ENCODE measurements at regions of chr9 and their contacts with region 1.

Region 1: DNA sequence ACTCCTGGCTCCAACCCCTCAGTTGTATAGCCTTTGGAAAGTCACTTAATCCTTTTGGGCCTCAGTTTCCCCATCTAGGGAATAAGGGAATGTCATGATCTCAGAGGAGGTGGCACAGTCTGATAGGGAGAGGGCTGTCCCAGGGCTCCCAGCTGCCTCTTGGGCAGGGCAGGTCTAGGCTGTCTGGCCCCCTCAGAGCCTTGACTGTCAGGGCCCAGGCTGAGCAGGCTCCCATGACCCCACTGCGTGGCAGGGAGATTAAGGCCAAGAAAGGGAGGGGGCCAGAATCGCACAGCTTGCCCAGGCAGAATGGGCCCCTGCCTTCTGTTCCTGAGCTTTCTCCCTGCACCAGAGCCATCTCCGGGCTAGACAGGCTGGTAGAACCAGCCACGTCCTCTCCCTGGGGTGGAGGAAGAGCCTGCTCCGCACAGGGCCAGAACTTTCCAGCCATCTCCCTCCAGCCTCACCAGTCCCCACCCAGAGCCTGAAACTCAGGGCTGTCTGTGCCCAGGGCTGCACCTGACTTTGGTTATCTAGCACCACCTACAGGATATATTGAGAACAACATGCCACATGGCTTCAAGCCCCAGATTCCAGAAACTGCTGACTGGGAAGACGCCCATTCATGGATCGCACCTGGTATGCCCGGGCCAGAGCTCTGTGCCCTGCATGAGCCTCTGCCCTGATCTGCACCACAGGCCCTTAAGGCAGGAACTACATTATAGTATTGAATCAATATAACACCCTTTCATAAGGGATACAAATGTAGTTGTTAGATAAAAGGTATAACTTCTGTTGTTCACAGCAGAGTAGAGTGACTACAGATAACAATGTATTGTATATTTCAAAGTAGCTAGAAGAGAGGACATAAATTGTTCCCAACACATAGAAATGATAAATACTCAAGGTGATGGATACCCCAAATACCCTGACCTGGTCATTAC is 32.0 kb downstream of the NAIF1 start:
- DNase-seq: peak; percentile 80
- ATAC-seq: peak; percentile 98
- H3K4me3 Mint-ChIP-seq: no peak overlapping the region
- H3K27ac Mint-ChIP-seq: peak overlapping the region; percentile 6
- H3K4me1 Mint-ChIP-seq: 0 out of 2 replicates have a peak, but pooled peaks cover 2% of the 10 kb centered on the region
- H3K27me3 Mint-ChIP-seq: no peaks in the 10 kb centered on the region
- CTCF ChIP-seq: peak; percentile 93

Region 2: GRCh38 chr9:127899128-127899946 is 135.8 kb before region 1 on chr9 and contains the start of gene ST6GALNAC6:
- CTCF ChIA-PET with region 1: no interaction called
- POLR2A ChIA-PET with region 1: no interaction called
- DNase-seq: peak; percentile 55
- ATAC-seq: peak; percentile 44
- H3K4me3 Mint-ChIP-seq: peak within 1 kb of the TSS; percentile 87
- H3K27ac Mint-ChIP-seq: peak within 1 kb of the TSS; percentile 76
- H3K4me1 Mint-ChIP-seq: peaks cover 37% of the 10 kb centered on the region
- H3K27me3 Mint-ChIP-seq: no peaks in the 10 kb centered on the region; the same call in 1 of the 2 replicates
- CTCF ChIP-seq: no peak
- total RNA-seq, gene ST6GALNAC6: 45.1 to 47.5 TPM (median 45.3 TPM) in 3 replicates

Region 3: DNA sequence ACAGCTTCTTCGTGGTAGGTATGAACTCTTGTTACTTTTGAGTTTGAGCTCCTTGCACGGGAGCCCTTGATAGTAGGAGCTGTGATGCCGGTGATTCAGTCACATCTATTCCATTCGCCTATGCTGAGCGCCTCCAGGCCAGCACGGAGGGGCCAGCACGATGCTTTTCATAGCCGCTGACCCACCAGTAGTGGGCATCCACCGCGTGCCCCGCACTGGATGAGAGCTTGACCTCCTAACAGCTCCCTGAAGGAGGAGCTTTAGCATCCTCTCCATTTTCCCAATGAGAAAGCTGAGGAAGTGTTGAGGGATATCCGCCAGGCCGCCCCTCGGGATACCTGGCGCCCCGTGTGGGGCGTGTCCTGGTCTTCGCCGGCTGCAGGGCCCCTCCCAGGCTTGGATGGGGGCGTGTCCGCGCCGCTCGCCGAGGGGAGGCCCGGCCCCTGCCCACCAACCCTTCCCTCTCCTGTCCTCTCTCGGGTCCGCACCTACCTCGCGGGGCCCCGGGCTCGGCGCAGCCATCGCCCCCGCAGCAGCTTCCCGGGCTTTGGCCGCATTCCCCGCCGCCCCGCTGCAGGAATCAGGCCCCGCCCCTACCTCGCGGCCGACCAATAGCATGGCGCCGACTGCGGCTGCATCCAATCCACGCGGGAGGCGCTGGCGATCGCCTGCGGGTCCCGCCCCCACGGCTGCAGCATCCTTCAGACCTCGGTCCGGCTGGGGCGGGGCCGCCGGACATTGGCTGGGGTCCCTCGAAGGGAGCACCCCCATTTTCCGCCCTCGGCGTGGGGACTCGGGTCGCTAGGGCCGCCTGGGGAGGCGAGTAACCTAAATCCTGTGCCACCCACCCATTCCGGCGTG is 104.6 kb before region 1 on chr9 and contains the start of gene PIP5KL1:
- CTCF ChIA-PET with region 1: interaction called, 14 read pairs
- POLR2A ChIA-PET with region 1: no interaction called
- DNase-seq: peak; percentile 95
- ATAC-seq: peak; percentile 62
- H3K4me3 Mint-ChIP-seq: peak within 1 kb of the TSS; percentile 65
- H3K27ac Mint-ChIP-seq: peak within 1 kb of the TSS; percentile 93
- H3K4me1 Mint-ChIP-seq: peaks cover 27% of the 10 kb centered on the region
- H3K27me3 Mint-ChIP-seq: peaks cover 29% of the 10 kb centered on the region
- CTCF ChIP-seq: no peak
- total RNA-seq, gene PIP5KL1: 15.8 to 20.2 TPM (median 16.8 TPM) in 3 replicates

Region 4: DNA sequence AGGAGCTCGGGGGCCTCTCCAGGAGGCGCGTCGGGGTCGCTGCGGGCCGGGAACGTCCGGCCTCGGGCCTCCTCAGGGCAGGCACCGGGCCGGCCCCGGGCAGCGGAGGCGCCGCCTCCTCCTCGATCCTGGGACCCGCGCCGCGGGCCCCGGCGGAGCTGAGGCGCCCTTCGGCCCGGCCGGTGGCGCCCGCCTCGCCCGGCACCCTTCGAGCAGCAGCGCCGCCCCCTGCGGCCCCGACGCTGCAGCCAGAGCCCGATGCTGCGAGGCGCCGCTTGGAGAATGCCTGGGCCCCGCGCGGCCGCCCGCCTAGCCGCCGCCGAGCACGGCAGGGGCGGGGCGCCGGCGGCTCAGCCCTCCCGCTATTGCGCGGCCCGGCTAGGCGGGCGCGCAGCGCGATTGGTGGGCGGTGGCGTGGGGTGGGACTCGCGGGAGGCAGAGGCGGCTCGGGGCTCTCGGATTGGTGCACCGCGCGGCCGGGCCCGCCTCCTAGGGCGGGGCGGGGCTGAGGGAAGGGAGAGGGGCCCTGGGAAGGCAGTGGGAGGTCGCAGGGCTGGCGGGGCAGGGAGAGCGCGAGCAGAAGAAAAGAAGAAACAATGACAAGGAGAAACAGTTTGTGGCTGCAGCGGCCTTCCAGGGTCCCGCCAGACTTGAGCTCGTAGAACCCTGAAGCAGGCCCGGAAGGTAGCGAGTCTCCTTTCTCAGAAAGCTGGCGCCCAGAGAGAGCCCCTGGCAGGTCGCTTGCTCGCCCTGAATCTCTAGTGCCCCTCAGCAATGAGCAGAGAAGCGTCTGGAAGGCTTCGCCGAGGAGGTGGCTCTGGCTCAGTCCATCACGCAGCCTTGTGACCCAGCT is 54.2 kb before region 1 on chr9 and contains the start of gene EEIG1:
- CTCF ChIA-PET with region 1: interaction called, 18 read pairs
- POLR2A ChIA-PET with region 1: interaction called, 3 read pairs
- DNase-seq: peak; percentile 98
- ATAC-seq: peak; percentile 91
- H3K4me3 Mint-ChIP-seq: peak within 1 kb of the TSS; percentile 95
- H3K27ac Mint-ChIP-seq: peak within 1 kb of the TSS; percentile 97
- H3K4me1 Mint-ChIP-seq: peaks cover 54% of the 10 kb centered on the region
- H3K27me3 Mint-ChIP-seq: no peaks in the 10 kb centered on the region
- CTCF ChIP-seq: no peak
- total RNA-seq, gene EEIG1: 42.2 to 66.4 TPM (median 51.3 TPM) in 3 replicates

Region 5: DNA sequence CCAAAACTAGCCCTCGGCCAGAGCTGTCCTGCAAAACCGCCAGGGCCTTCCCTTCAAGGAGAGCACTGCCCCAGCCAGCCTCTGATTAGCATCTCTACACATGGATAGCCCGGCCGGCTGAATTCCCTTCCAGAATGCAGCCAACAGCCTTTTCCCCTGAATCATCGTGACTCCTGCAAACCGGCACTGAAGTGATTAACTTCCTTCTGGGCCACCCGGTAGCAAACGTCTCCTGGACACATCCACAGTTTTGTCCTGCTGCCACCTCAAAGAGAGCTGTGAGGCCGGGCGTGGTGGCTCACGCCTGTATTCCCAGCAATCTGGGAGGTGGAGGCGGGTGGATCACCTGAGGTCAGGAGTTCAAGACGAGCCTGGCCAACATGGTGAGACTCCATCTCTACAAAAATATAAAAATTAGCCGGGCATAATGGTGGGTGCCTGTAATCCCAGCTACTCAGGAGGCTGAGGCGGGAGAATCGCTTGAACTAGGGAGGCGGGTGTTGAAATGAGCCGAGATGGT is 33.3 kb before region 1 on chr9:
- CTCF ChIA-PET with region 1: interaction called, 11 read pairs
- POLR2A ChIA-PET with region 1: no interaction called
- DNase-seq: peak; percentile 46
- ATAC-seq: peak; percentile 92
- H3K4me3 Mint-ChIP-seq: no peak overlapping the region
- H3K27ac Mint-ChIP-seq: peak overlapping the region; percentile 85; the same call in 1 of the 2 replicates
- H3K4me1 Mint-ChIP-seq: peaks cover 11% of the 10 kb centered on the region
- H3K27me3 Mint-ChIP-seq: no peaks in the 10 kb centered on the region
- CTCF ChIP-seq: no peak

Region 6: DNA sequence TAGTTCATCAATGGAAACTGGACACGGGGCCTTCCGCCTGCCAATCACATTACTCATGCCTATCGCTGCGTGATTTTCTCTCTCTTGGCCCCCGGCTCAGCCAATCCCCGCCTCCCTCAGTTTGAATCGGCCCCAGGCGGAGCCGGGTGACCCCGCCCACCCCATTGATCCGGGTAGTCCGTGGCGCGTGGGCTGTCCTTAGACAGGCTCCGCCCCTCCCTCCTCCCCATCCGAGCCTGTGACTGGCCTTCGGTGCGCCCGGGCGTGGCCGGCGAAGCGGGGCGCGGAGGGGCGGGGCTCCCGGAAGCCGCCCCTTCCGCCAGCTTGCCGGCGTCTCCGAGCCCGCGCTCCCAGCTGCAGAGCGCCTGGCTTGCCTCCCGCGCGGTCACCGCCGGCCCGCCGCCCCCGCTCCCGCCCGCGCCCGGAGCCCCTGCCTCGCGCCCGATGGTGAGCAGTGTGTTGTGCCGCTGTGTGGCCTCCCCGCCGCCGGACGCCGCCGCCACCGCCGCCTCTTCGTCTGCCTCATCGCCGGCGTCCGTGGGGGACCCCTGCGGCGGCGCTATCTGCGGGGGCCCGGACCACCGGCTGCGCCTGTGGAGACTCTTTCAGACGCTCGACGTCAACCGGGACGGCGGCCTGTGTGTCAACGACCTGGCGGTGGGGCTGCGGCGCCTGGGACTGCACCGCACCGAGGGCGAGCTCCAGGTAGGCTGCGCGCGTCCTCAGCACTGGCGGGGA is 33.0 kb after region 1 on chr9 and contains the start of gene SLC25A25:
- CTCF ChIA-PET with region 1: interaction called, 19 read pairs
- POLR2A ChIA-PET with region 1: interaction called, 4 read pairs
- DNase-seq: peak; percentile 100
- ATAC-seq: peak; percentile 86
- H3K4me3 Mint-ChIP-seq: peak within 1 kb of the TSS; percentile 85
- H3K27ac Mint-ChIP-seq: peak within 1 kb of the TSS; percentile 67
- H3K4me1 Mint-ChIP-seq: peaks cover 38% of the 10 kb centered on the region
- H3K27me3 Mint-ChIP-seq: no peaks in the 10 kb centered on the region
- CTCF ChIP-seq: no peak
- total RNA-seq, gene SLC25A25: 15.2 to 17.4 TPM (median 15.2 TPM) in 3 replicates

Region 7: GRCh38 chr9:129006328-129007034 is 971.4 kb after region 1 on chr9:
- CTCF ChIA-PET with region 1: no interaction called
- POLR2A ChIA-PET with region 1: no interaction called
- DNase-seq: peak; percentile 80
- ATAC-seq: peak; percentile 86
- H3K4me3 Mint-ChIP-seq: no peak overlapping the region
- H3K27ac Mint-ChIP-seq: peak overlapping the region; percentile 82; the same call in 1 of the 2 replicates
- H3K4me1 Mint-ChIP-seq: 0 out of 2 replicates have a peak, but pooled peaks cover 2% of the 10 kb centered on the region
- H3K27me3 Mint-ChIP-seq: no peaks in the 10 kb centered on the region
- CTCF ChIP-seq: peak; percentile 74